Activated T-helper 2 cell treated with anti-CD3 and anti-CD28 coated beads, Interferon-gamma antibody, Interleukin-2, Interleukin-4, amounts not matched to agents 10 μg/mL and 5 μg/mL and 100 μg/mL, durations not matched to agents 14 hours and 24 hours and 36 hours (primary cell): ENCODE measurements at regions of chr6 and their contacts with region 1.

Region 1: GRCh38 chr6:149366267-149366921 is 33.7 kb upstream of the SUMO4 start:
- DNase-seq: no peak
- H3K4me3 Mint-ChIP-seq: peak overlapping the region; percentile 20
- H3K27ac Mint-ChIP-seq: no peak overlapping the region
- H3K4me1 Mint-ChIP-seq: peaks cover 47% of the 10 kb centered on the region
- H3K27me3 Mint-ChIP-seq: no peaks in the 10 kb centered on the region

Region 2: DNA sequence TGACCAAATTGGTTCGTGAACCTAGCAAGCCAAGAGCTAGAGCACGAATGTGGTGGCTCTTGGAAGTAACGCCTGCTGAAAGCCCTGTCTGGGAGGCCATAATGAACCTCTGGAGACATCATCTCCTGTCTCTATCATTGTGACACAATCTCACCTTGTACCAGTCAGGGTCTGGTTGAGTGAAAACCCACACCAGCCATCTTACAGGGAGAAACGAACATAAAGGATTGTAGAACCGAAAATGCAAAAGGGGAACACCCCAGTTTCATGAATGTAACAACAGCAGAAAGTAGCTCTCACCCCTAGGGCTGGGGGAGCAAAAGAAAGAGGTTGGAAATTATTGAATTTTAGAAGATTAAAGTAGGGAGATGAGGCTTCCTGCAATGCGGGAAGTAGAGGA is 99.7 kb before region 1 on chr6:
- intact Hi-C with region 1: no loop called
- DNase-seq: no peak
- H3K4me3 Mint-ChIP-seq: no peak overlapping the region
- H3K27ac Mint-ChIP-seq: no peak overlapping the region
- H3K4me1 Mint-ChIP-seq: peaks cover 36% of the 10 kb centered on the region
- H3K27me3 Mint-ChIP-seq: no peaks in the 10 kb centered on the region

Region 3: DNA sequence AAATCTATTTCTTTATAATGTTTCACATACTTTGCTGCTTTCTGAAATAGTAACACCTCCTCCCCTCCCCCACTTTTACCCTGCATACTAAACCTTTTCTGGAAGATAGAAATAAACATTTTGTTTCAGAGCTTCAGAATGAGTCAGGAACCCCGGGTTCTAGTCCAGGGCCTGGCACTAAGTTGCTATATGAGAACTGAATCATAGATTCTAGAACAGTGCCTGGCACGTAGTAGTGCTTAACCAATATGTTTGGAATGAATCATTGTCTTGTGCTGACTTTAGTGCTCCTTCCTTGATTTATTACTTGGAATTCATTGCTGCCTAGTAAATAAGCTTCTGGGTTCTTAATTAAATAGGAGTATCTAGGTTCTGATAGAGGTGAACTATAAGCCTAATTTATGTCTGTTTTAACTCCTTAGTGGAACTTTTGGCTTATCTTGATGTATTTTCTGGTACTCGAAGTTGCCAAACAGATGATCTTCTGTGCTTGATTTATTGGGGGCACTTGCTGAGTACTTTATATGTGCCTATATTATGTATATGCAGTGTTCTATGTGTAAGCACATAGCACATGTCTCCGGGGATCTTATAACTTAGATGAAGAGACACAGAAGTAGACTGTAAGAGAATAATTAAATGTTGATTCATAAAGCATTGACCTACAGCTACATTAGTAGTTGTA is 30.3 kb before region 1 on chr6:
- intact Hi-C with region 1: loop called (anchors 1 kb)
- DNase-seq: no peak
- H3K4me3 Mint-ChIP-seq: peak overlapping the region; percentile 45
- H3K27ac Mint-ChIP-seq: peak overlapping the region; percentile 88
- H3K4me1 Mint-ChIP-seq: peaks cover 80% of the 10 kb centered on the region
- H3K27me3 Mint-ChIP-seq: no peaks in the 10 kb centered on the region

Region 4: DNA sequence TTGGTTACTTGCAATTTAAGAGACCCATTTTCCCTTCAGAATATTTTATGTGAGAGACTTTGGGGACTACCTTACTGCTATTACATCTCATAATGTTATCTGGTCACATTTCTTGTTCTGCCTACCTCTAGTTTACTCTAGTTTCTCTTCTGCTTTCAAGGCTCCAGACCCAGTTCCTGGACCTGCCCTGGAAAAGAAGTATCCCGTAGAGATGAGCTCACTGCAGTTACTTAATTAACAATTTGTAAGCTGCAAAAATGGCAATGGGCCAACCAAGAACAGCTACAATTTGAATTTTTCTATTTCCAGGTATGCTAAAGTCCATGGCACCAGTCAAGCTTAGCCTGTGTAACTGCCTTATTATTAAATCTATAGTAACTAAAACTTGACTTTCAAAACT is 23.9 kb before region 1 on chr6:
- intact Hi-C with region 1: loop called (anchors 2 kb)
- DNase-seq: no peak
- H3K4me3 Mint-ChIP-seq: peak overlapping the region; percentile 35
- H3K27ac Mint-ChIP-seq: peak overlapping the region; percentile 85
- H3K4me1 Mint-ChIP-seq: peaks cover 64% of the 10 kb centered on the region
- H3K27me3 Mint-ChIP-seq: no peaks in the 10 kb centered on the region

Region 5: GRCh38 chr6:149380523-149380922 is 14.1 kb after region 1 on chr6:
- intact Hi-C with region 1: loop called (anchors 2 kb)
- DNase-seq: no peak
- H3K4me3 Mint-ChIP-seq: no peak overlapping the region
- H3K27ac Mint-ChIP-seq: no peak overlapping the region
- H3K4me1 Mint-ChIP-seq: peaks cover 45% of the 10 kb centered on the region
- H3K27me3 Mint-ChIP-seq: no peaks in the 10 kb centered on the region

Region 6: GRCh38 chr6:149508485-149508884 is 142.1 kb after region 1 on chr6:
- intact Hi-C with region 1: no loop called
- DNase-seq: no peak
- H3K4me3 Mint-ChIP-seq: no peak overlapping the region
- H3K27ac Mint-ChIP-seq: peak overlapping the region; percentile 59
- H3K4me1 Mint-ChIP-seq: peaks cover 27% of the 10 kb centered on the region
- H3K27me3 Mint-ChIP-seq: no peaks in the 10 kb centered on the region